ENCODE measurements at regions of chr15 and their contacts with region 1.

Region 1: DNA sequence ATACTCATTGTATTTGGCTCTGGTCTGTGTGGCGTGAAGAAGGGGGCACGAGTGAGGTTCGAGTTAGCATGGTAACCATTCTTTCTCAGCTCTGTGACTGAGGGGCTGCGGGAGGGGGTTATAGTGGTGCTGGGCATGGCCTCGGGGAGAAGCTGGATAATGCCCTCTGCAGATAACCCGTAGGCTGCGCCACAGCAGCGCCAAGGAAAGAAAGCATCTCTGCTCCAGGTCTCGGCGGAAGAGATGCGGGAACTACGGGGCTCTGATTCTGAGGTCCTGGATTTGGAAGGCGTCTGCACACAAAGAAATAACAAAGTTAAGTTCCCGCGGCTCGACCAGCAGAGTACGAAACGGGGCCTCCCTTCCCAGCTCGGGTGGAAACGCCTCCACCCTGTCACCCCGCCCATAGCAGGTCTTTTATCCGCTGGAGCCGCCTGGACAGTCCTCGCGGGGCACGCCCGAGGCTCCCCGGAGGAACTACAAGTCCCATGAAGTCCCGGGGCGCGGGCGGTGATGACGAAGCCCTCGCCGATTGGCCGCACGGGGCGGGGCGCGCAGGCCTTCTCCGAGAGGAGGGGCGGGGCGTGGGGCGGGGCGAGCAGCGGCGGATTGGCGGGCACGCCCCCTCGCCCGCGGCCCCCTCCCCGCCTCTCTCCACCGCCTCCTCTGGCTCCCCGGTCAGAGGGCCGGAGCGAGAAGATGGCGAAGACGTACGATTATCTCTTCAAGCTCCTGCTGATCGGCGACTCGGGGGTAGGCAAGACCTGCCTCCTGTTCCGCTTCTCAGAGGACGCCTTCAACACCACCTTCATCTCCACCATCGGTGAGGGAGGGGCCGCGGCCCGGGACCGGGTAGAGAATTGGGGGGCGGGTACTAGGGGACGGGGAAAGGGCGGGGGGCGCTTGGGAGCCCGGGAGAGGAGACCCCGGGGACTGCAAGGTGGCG is at the start of gene RAB8B:
- DNase-seq: peak; percentile 97
- ATAC-seq: peak; percentile 90
- H3K4me3 ChIP-seq: peak within 1 kb of the TSS; percentile 74 to 99 (median 83)
- H3K27ac ChIP-seq: peak within 1 kb of the TSS; percentile 76 to 95 (median 84)
- H3K4me1 ChIP-seq: peaks cover 7 to 27% of the 10 kb centered on the region in 2 donors
- H3K27me3 ChIP-seq: no peaks in the 10 kb centered on the region
- CTCF ChIP-seq: peak in 1 of 5 experiments; percentile 18
- POLR2A ChIP-seq: peak; percentile 72 to 78
- total RNA-seq, gene RAB8B: 7.2 to 33.4 (median 14.3) TPM

Region 2: GRCh38 chr15:63048115-63048775 is 141.0 kb before region 1 on chr15:
- in situ Hi-C with region 1: no loop called
- intact Hi-C with region 1: loop called (anchors 2 kb)
- DNase-seq: peak; percentile 78 to 86
- ATAC-seq: peak; percentile 75 to 78
- H3K4me3 ChIP-seq: peak overlapping the region; percentile 72 to 94 (median 80)
- H3K27ac ChIP-seq: peak overlapping the region; percentile 86 to 96 (median 91)
- H3K4me1 ChIP-seq: peaks cover 70 to 74% of the 10 kb centered on the region in 2 donors
- H3K27me3 ChIP-seq: peaks cover 0 to 19% (median 0%) of the 10 kb centered on the region in 3 donors
- CTCF ChIP-seq: peak; percentile 97 to 99 (median 98)
- POLR2A ChIP-seq: peak; percentile 61 to 74

Region 3: GRCh38 chr15:63157118-63157843 is 31.9 kb before region 1 on chr15 and contains the start of gene RPS27L:
- in situ Hi-C with region 1: no loop called
- intact Hi-C with region 1: loop called (anchors 1 kb)
- DNase-seq: peak; percentile 89
- ATAC-seq: peak; percentile 92 to 93
- H3K4me3 ChIP-seq: peak within 1 kb of the TSS; percentile 68 to 91 (median 89)
- H3K27ac ChIP-seq: peak within 1 kb of the TSS; percentile 86 to 98 (median 94)
- H3K4me1 ChIP-seq: peaks cover 13 to 28% of the 10 kb centered on the region in 2 donors
- H3K27me3 ChIP-seq: no peaks in the 10 kb centered on the region
- CTCF ChIP-seq: no peak
- POLR2A ChIP-seq: peak; percentile 84 to 87
- total RNA-seq, gene RPS27L: 53.0 to 145 (median 78.0) TPM

Region 4: GRCh38 chr15:63234451-63234870 is 45.3 kb after region 1 on chr15:
- in situ Hi-C with region 1: loop called in 1 of 4 experiments (anchors 5 kb)
- intact Hi-C with region 1: no loop called
- DNase-seq: peak; percentile 24 to 46
- ATAC-seq: peak; percentile 62 to 64
- H3K4me3 ChIP-seq: no peak overlapping the region
- H3K27ac ChIP-seq: peak overlapping the region; percentile 42 to 54 (median 45)
- H3K4me1 ChIP-seq: peaks cover 17 to 36% of the 10 kb centered on the region in 2 donors
- H3K27me3 ChIP-seq: no peaks in the 10 kb centered on the region
- CTCF ChIP-seq: no peak
- POLR2A ChIP-seq: no peak

Region 5: GRCh38 chr15:63277038-63277892 is 88.1 kb after region 1 on chr15 and contains the start of gene APH1B:
- in situ Hi-C with region 1: no loop called
- intact Hi-C with region 1: loop called (anchors 5 kb)
- DNase-seq: peak; percentile 64 to 68
- ATAC-seq: peak; percentile 68 to 81
- H3K4me3 ChIP-seq: peak within 1 kb of the TSS; percentile 84 to 99 (median 92)
- H3K27ac ChIP-seq: peak within 1 kb of the TSS; percentile 82 to 89 (median 86)
- H3K4me1 ChIP-seq: peaks cover 0 to 3% of the 10 kb centered on the region in 2 donors
- H3K27me3 ChIP-seq: no peaks in the 10 kb centered on the region
- CTCF ChIP-seq: no peak
- POLR2A ChIP-seq: peak; percentile 26 to 53
- total RNA-seq, gene APH1B: 2.4 to 5.6 (median 2.9) TPM